ENCODE measurements at regions of chr10 and their contacts with region 1.

Region 1: GRCh38 chr10:103367782-103368518 is at the start of gene TAF5:
- H3K4me3 Mint-ChIP-seq: peak within 1 kb of the TSS; percentile 85
- H3K27ac Mint-ChIP-seq: peak within 1 kb of the TSS; percentile 81
- H3K4me1 Mint-ChIP-seq: no peaks in the 10 kb centered on the region
- H3K27me3 Mint-ChIP-seq: no peaks in the 10 kb centered on the region

Region 2: GRCh38 chr10:103192451-103193106 is 175.4 kb before region 1 on chr10:
- intact Hi-C with region 1: no loop called
- H3K4me3 Mint-ChIP-seq: peak overlapping the region; percentile 98
- H3K27ac Mint-ChIP-seq: peak overlapping the region; percentile 100
- H3K4me1 Mint-ChIP-seq: peaks cover 56% of the 10 kb centered on the region
- H3K27me3 Mint-ChIP-seq: no peaks in the 10 kb centered on the region

Region 3: GRCh38 chr10:103350501-103351260 is 17.3 kb before region 1 on chr10 and contains the start of gene PCGF6:
- intact Hi-C with region 1: loop called (anchors 2 kb)
- H3K4me3 Mint-ChIP-seq: peak within 1 kb of the TSS; percentile 99
- H3K27ac Mint-ChIP-seq: peak within 1 kb of the TSS; percentile 91
- H3K4me1 Mint-ChIP-seq: peaks cover 5% of the 10 kb centered on the region
- H3K27me3 Mint-ChIP-seq: no peaks in the 10 kb centered on the region

Region 4: GRCh38 chr10:103395754-103396063 is 27.8 kb after region 1 on chr10:
- intact Hi-C with region 1: loop called (anchors 2 kb)
- H3K4me3 Mint-ChIP-seq: peak overlapping the region; percentile 93
- H3K27ac Mint-ChIP-seq: peak overlapping the region; percentile 90
- H3K4me1 Mint-ChIP-seq: peaks cover 42% of the 10 kb centered on the region
- H3K27me3 Mint-ChIP-seq: no peaks in the 10 kb centered on the region